GM12878 (cell line): ENCODE measurements at regions of chr4 and their contacts with region 1.

Region 1: DNA sequence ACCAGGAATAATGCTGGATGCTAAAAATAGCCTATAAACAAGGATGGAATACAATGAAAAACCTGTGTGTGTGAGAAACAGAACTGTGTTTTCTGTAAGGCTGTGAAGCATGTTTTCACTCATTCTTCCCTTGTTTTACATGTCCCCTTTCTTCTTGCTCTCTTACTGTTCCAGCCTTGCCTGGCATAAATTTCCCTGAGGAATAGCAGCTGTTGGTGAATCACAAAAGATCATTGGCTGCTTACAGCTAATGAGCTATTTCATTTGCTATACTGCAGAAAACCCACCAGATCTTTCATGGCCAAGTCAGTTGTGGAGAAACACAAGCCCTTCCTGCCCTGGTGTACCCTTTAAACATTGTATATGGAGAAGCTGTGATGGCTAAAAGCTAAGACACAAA is 91.1 kb downstream of the LDB2 start:
- DNase-seq: no peak
- ATAC-seq: no peak
- H3K4me3 ChIP-seq: no peak overlapping the region
- H3K27ac ChIP-seq: no peak overlapping the region
- H3K4me1 ChIP-seq: no peaks in the 10 kb centered on the region
- H3K27me3 ChIP-seq: no peaks in the 10 kb centered on the region
- CTCF ChIP-seq: no peak
- EP300 ChIP-seq: no peak
- POLR2A ChIP-seq: no peak
- RAD21 ChIP-seq: no peak

Region 2: GRCh38 chr4:16001484-16001858 is 805.9 kb before region 1 on chr4:
- CTCF ChIA-PET with region 1: no interaction called
- POLR2A ChIA-PET with region 1: no interaction called
- RAD21 ChIA-PET with region 1: no interaction called
- SMC1A ChIA-PET with region 1: no interaction called
- in situ Hi-C with region 1: no loop called
- intact Hi-C with region 1: no loop called
- DNase-seq: peak; percentile 13
- ATAC-seq: peak; percentile 98
- H3K4me3 ChIP-seq: no peak overlapping the region
- H3K27ac ChIP-seq: no peak overlapping the region
- H3K4me1 ChIP-seq: no peaks in the 10 kb centered on the region
- H3K27me3 ChIP-seq: no peaks in the 10 kb centered on the region
- CTCF ChIP-seq: peak; percentile 87 to 90 (median 87)
- EP300 ChIP-seq: no peak
- POLR2A ChIP-seq: no peak
- RAD21 ChIP-seq: peak; percentile 91

Region 3: GRCh38 chr4:16794816-16795445 is 12.4 kb before region 1 on chr4:
- CTCF ChIA-PET with region 1: interaction called, 14 read pairs
- POLR2A ChIA-PET with region 1: no interaction called
- RAD21 ChIA-PET with region 1: no interaction called
- SMC1A ChIA-PET with region 1: interaction called, 3 read pairs
- in situ Hi-C with region 1: no loop called
- intact Hi-C with region 1: no loop called
- DNase-seq: no peak
- ATAC-seq: peak; percentile 51; the same call in 2 of the 3 replicates
- H3K4me3 ChIP-seq: no peak overlapping the region
- H3K27ac ChIP-seq: no peak overlapping the region
- H3K4me1 ChIP-seq: no peaks in the 10 kb centered on the region
- H3K27me3 ChIP-seq: no peaks in the 10 kb centered on the region
- CTCF ChIP-seq: peak; percentile 55 to 68 (median 65)
- EP300 ChIP-seq: no peak
- POLR2A ChIP-seq: no peak
- RAD21 ChIP-seq: peak; percentile 57